ENCODE measurements at regions of chr2 and their contacts with region 1.

Region 1: DNA sequence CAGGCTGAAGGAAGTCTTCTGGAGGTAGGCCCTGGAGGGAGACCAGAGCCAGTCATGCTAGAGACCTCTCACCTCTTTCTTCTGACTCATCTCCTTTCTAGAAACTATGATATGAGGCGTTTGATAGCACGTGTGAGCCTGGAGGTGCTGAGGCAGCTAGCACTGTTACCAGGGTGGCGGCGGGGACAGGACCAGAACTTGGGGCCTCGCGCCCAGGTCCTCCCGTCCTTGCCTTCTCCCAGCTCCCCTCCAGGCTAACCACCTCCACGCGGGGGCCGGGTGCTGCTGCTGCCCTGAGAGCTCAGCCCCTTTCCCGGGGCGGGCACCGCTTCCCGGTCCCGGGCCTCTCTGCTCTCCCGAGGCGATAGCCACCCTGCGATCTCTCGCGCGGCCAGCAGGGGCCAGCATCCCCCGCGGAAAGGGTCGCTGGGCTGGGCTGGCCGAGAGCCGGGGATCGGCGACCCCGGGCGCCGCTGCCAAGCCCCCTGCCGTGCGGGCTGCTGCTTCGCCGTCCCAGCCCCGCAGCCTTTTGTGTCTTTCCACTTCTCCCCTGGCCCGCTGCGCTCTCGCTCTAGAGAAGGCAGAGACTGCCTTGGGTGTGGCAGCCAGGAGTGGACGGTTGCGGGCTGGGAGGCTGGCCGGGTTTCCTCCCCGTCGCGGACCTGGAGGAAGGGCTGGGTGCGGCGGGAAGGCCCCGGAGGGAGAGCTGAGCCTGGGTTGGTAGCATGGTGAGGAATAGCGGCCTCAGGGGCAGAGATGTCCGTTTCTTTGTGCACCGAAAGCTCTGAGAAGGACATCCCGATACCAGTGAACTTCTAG is 49.1 kb downstream of the TMEM17 start:
- DNase-seq: peak; percentile 69
- H3K4me3 ChIP-seq: peak overlapping the region; percentile 21 to 60 (median 45)
- H3K27ac ChIP-seq: no peak overlapping the region
- H3K4me1 ChIP-seq: peaks cover 5% of the 10 kb centered on the region
- H3K27me3 ChIP-seq: no peaks in the 10 kb centered on the region
- CTCF ChIP-seq: peak; percentile 92 to 93
- POLR2A ChIP-seq: no peak

Region 2: GRCh38 chr2:61993444-61994024 is 463.4 kb before region 1 on chr2:
- CTCF ChIA-PET with region 1: interaction called, 21 read pairs
- POLR2A ChIA-PET with region 1: no interaction called
- dilution Hi-C with region 1: no loop called
- intact Hi-C with region 1: no loop called
- DNase-seq: peak; percentile 72
- H3K4me3 ChIP-seq: no peak overlapping the region
- H3K27ac ChIP-seq: no peak overlapping the region
- H3K4me1 ChIP-seq: no peaks in the 10 kb centered on the region
- H3K27me3 ChIP-seq: no peaks in the 10 kb centered on the region
- CTCF ChIP-seq: peak; percentile 50 to 59
- POLR2A ChIP-seq: no peak

Region 3: DNA sequence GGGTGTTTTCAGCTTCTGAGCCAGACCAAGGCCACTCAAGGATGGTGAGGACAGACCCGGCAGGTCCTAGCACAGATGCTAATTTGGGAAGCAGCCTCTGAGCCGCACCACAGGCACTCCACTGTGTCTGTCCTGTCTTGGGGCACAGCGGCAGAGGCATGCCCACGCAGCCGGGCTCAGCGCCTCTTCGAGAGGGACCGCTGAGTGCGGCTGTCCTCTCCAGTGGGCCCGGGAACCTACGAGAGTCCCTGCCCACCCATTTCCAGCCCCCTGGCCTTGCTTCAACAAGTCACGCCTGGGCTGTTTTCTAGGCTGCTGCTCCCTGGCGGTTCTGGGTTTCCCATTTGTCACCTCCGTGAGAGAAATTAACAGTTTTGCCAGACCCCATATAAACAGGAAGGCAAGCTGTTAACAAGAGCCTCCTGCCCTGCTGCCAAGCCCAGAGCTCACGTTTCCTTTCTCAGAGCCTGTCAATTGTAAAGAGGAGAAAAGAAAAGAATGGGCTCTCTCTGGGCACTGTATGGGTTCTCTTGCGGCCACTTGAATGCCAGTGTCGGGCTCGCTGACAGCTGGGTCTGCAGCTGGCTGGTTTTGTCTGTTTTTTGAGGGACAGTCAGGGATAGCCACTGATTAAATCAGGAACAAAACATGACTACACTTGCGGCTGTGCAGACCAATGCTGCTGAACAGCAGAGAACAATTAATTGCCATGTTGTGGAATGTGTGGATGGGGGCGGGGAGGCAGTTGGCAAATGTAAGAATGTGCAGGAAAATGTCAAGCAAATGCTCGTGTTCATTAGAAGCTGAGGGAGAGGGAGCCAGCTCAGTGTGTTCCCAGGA is 18.5 kb after region 1 on chr2:
- CTCF ChIA-PET with region 1: interaction called, 26 read pairs
- POLR2A ChIA-PET with region 1: no interaction called
- dilution Hi-C with region 1: no loop called
- intact Hi-C with region 1: no loop called
- DNase-seq: peak; percentile 95
- H3K4me3 ChIP-seq: peak overlapping the region in 1 of 3 experiments; percentile 24
- H3K27ac ChIP-seq: peak overlapping the region; percentile 8
- H3K4me1 ChIP-seq: peaks cover 28% of the 10 kb centered on the region
- H3K27me3 ChIP-seq: no peaks in the 10 kb centered on the region
- CTCF ChIP-seq: no peak
- POLR2A ChIP-seq: no peak

Region 4: GRCh38 chr2:62724886-62725711 is 268.2 kb after region 1 on chr2:
- CTCF ChIA-PET with region 1: interaction called, 9 read pairs
- POLR2A ChIA-PET with region 1: no interaction called
- dilution Hi-C with region 1: no loop called
- intact Hi-C with region 1: loop called (anchors 1 kb)
- DNase-seq: peak; percentile 11
- H3K4me3 ChIP-seq: no peak overlapping the region
- H3K27ac ChIP-seq: no peak overlapping the region
- H3K4me1 ChIP-seq: no peaks in the 10 kb centered on the region
- H3K27me3 ChIP-seq: no peaks in the 10 kb centered on the region
- CTCF ChIP-seq: peak; percentile 24 to 47
- POLR2A ChIP-seq: no peak

Region 5: DNA sequence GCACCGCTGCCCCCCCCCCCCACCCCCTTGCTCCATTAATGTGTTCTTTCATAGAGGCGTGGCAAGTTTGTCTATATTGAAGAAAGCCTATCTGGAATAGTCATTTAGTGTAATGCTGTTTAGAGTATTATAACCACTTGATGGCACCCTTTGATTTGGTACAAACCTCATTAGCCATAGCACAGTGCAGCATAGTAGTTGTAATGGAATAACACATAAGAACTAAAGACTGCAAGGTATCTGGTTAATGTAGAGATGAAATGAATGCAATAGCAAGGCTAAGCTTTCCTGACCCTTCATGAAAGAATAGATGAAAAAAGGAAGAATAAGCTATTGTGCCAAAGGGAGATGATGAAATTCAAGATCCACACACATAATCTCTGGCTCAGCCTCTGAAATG is 330.5 kb after region 1 on chr2:
- CTCF ChIA-PET with region 1: interaction called, 20 read pairs
- POLR2A ChIA-PET with region 1: no interaction called
- dilution Hi-C with region 1: no loop called
- intact Hi-C with region 1: no loop called
- DNase-seq: peak; percentile 69
- H3K4me3 ChIP-seq: no peak overlapping the region
- H3K27ac ChIP-seq: no peak overlapping the region
- H3K4me1 ChIP-seq: peaks cover 4% of the 10 kb centered on the region
- H3K27me3 ChIP-seq: no peaks in the 10 kb centered on the region
- CTCF ChIP-seq: peak in 1 of 2 donors; percentile 12
- POLR2A ChIP-seq: no peak

Region 6: DNA sequence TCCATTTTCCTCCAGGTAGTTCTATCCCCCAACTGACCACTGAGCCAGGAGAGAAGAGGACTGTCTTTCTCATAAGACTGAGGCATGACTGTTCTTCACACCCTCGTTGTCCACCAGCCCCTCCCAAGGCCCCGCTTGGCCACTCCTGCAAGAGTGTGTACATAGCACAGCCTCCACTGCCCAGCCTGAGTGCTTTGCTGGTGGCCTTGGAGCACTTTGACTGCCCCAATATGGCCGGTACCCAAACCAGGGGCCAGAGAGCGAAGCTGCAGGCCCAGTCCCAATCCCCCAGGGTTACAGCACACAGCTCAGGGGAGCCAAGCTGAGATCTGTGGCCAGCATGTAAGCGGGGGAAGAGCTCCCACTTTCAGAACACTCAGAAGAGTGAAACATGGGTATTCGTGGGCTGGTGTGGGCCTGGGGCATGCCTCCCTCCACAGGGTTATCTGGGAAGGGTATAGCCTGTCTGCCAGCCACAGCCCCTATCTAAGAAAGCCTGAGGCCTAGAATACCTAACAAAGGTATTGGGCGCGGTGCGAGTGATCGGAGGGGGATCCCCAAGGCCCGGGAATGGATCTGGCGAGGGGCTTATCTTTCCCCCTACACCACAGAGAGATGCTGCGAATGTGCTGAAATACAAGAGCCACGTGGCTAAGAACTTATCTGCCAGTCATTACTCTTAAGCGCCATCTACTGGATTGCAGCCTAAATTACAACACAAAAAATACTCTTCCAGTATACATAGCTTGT is 967.6 kb after region 1 on chr2:
- CTCF ChIA-PET with region 1: interaction called, 10 read pairs
- POLR2A ChIA-PET with region 1: no interaction called
- dilution Hi-C with region 1: no loop called
- intact Hi-C with region 1: loop called (anchors 10 kb)
- DNase-seq: peak; percentile 33
- H3K4me3 ChIP-seq: no peak overlapping the region
- H3K27ac ChIP-seq: no peak overlapping the region
- H3K4me1 ChIP-seq: no peaks in the 10 kb centered on the region
- H3K27me3 ChIP-seq: no peaks in the 10 kb centered on the region
- CTCF ChIP-seq: peak; percentile 55 to 56
- POLR2A ChIP-seq: no peak